ENCODE measurements at regions of chr9 and their contacts with region 1.

Region 1: GRCh38 chr9:5832543-5833529 is at the start of gene ERMP1:
- DNase-seq: peak; percentile 91
- ATAC-seq: peak; percentile 88
- H3K4me3 Mint-ChIP-seq: peak within 1 kb of the TSS; percentile 94
- H3K27ac Mint-ChIP-seq: peak within 1 kb of the TSS; percentile 92
- H3K4me1 Mint-ChIP-seq: peaks cover 45% of the 10 kb centered on the region
- H3K27me3 Mint-ChIP-seq: no peaks in the 10 kb centered on the region
- total RNA-seq, gene ERMP1: 25.0 to 32.3 TPM

Region 2: GRCh38 chr9:5820425-5820824 is 12.4 kb before region 1 on chr9:
- CTCF ChIA-PET with region 1: interaction called, 15 read pairs
- DNase-seq: no peak
- ATAC-seq: no peak
- H3K4me3 Mint-ChIP-seq: no peak overlapping the region
- H3K27ac Mint-ChIP-seq: no peak overlapping the region
- H3K4me1 Mint-ChIP-seq: peaks cover 6% of the 10 kb centered on the region
- H3K27me3 Mint-ChIP-seq: no peaks in the 10 kb centered on the region

Region 3: GRCh38 chr9:5843794-5844504 is 11.1 kb after region 1 on chr9:
- CTCF ChIA-PET with region 1: interaction called, 71 read pairs
- DNase-seq: no peak
- ATAC-seq: peak; percentile 31
- H3K4me3 Mint-ChIP-seq: peak overlapping the region; percentile 43
- H3K27ac Mint-ChIP-seq: peak overlapping the region; percentile 91
- H3K4me1 Mint-ChIP-seq: peaks cover 89% of the 10 kb centered on the region
- H3K27me3 Mint-ChIP-seq: no peaks in the 10 kb centered on the region

Region 4: DNA sequence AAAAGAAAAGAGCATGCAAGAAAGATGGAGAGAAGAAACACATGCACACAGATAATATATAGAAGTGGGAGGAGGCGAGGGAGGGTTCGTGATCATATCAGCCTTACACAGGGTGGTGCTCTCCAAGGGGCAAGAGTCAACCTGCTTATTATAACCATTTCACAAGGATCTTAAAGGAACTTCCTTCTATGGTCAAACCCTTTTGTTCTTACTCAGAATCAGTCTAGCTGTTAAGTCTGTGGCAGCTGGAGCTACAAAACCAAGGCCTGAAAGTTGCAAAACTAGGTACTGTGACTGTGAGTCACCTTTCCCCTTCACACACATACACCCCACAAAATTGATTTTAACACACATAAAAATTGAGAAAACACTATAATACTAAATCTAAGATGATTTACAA is 18.6 kb after region 1 on chr9:
- CTCF ChIA-PET with region 1: interaction called, 71 read pairs
- DNase-seq: peak; percentile 81
- ATAC-seq: peak; percentile 99
- H3K4me3 Mint-ChIP-seq: peak overlapping the region; percentile 23
- H3K27ac Mint-ChIP-seq: peak overlapping the region; percentile 84
- H3K4me1 Mint-ChIP-seq: peaks cover 71% of the 10 kb centered on the region
- H3K27me3 Mint-ChIP-seq: no peaks in the 10 kb centered on the region

Region 5: GRCh38 chr9:5879419-5880181 is 46.8 kb after region 1 on chr9:
- CTCF ChIA-PET with region 1: interaction called, 10 read pairs
- DNase-seq: no peak
- ATAC-seq: peak; percentile 84
- H3K4me3 Mint-ChIP-seq: no peak overlapping the region
- H3K27ac Mint-ChIP-seq: no peak overlapping the region
- H3K4me1 Mint-ChIP-seq: peaks cover 24% of the 10 kb centered on the region
- H3K27me3 Mint-ChIP-seq: no peaks in the 10 kb centered on the region